Ascending aorta (tissue), 2 donors: ENCODE measurements at regions of chr18 and their contacts with region 1.

Region 1: DNA sequence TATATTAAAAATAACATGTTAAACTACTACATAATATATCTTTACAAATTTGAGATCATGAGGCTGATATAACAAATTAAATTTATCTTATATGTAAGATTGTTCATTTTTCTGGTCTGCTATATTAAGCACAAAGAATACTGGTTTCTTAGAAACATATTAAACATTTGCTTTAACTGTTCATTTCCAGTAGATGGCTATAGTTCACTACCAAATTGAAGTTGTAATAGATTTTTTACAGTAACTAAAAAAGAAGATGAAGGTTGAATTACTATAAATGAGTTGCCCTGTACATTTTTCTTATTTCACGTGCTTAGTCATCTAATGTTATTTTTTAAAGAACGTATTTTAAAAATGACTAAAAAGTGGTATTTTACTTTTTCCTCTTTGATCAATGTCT is 57.0 kb downstream of the ZNF407 start:
- DNase-seq: no peak
- H3K4me3 ChIP-seq: no peak overlapping the region
- H3K27ac ChIP-seq: no peak overlapping the region
- H3K4me1 ChIP-seq: no peaks in the 10 kb centered on the region
- H3K27me3 ChIP-seq: no peaks in the 10 kb centered on the region
- CTCF ChIP-seq: no peak

Region 2: DNA sequence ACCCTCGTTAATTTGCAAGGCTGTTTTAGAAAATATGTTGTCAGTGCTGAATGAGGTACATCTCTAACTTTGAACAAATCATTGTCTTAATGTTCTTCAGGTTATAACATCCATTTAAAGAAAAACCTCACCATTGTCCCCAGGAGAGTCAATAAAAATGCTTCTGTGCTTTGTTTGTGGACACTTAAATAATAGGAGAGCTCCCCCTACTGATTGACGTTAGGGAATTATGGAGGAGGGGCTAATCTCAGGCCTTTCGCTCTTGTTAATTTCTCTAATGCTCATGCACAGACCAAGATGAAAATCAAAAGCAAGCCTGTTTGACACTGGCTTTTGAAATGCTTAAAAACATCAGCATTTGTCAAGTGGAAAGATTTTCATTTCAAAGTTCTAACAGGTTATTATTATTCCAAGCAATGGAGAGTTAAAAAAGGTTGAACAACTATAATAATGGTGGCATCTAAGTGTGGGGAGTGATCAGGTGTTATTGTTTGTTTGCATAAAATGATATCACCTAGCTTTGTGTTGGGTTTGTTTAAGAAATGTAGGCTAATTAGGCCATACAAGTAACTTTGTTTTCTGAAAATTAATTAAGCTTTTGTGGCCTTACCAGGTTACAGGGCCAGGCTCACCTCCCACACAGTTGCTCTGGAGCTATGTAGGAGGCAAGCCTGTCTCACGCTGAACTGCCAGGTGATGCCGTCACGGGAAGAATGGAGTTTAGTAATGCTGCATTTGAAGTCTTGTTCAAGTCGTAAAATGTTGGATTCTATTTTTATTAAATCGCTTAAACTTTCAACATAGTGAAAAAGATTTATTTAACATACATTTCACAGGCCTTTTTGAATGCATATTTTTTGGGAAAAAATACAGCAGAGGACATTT is 824.6 kb after region 1 on chr18:
- intact Hi-C with region 1: loop called (anchors 5 kb)
- DNase-seq: no peak
- H3K4me3 ChIP-seq: no peak overlapping the region
- H3K27ac ChIP-seq: no peak overlapping the region
- H3K4me1 ChIP-seq: no peaks in the 10 kb centered on the region
- H3K27me3 ChIP-seq: no peaks in the 10 kb centered on the region
- CTCF ChIP-seq: peak; percentile 32 to 63 (median 37)

Region 3: DNA sequence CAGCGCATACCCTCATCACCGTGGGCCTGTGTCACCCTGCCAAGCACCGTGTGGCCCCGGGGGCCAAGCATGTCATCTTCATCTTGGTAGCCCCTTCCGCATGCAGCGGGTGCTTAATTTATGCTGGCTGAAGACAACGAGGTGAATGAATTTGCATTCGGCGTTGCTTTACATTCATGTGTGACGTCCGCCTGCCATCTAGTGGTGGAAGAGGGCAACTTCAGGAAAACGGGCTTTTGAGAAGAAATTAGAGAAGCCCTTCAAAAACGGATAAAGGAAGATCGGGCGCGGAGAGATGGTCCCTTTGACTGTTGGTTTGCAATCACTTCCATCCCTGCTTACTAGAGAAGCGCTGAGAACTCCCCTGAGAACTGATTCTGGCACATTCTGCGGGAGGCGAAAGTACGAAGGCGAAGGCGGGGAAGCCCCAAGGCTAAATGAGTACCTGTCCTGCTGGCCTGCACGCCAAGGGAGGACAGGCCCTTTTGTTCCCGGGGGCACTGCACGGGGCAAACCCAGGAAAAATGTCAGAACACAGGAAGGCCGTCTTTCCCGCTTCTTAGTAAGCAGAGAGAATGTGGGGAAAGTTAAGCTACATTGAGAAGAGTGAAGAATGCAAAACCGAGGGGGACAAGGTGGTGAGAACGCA is 1694.6 kb after region 1 on chr18:
- intact Hi-C with region 1: loop called (anchors 5 kb)
- DNase-seq: peak in 1 of 2 donors; percentile 76
- H3K4me3 ChIP-seq: peak overlapping the region; percentile 17 to 51
- H3K27ac ChIP-seq: no peak overlapping the region
- H3K4me1 ChIP-seq: no peaks in the 10 kb centered on the region
- H3K27me3 ChIP-seq: no peaks in the 10 kb centered on the region
- CTCF ChIP-seq: peak; percentile 64 to 87 (median 83)